ENCODE measurements at regions of chr10 and their contacts with region 1.

Region 1: DNA sequence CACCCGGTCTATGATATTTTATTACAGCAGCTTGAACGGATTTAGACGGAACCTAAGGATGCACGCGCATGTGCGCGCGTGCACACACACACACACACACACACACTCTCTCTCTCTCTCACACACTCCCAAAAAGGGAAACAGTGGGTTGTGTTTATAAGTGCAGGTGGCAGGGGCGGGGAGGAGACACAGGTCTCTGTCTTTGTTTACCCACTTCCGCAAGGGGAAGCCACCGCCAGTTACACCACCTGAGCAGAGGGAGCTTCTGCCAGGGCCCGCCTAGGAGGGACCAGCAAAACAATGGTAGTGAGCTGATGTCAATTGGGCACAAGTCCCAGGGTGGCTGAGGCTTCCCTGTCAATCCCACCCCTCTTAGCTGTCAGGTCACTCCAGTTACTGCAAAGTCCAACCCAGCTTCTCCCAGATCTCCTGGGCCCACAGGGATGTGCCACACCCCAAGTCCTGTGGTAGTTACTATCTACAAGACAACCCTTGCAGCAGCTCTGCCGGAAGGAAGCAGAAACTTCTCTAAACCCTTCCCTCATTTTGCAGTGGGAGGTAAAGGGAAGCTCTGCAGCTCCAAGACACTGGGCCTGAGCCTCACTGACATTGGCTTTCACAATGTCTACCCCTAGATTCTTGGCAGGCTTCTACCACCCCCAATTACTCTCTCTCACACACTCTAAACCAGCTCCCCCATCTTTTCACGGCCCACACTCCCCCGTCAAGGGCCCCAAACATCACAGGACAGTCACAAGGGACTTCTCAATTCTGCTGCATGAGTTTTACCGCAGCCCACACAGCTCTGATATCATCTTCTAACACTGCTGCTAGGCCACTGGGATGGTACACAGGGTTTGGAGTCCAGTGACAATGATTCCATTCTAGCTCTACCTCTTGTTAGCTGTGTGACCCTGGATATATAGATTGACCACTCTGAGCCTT is 17.6 kb downstream of the ANXA11 start:
- DNase-seq: no peak
- ATAC-seq: peak; percentile 11 to 39 (median 14)
- H3K4me3 ChIP-seq: peak overlapping the region in 1 of 10 donors; percentile 12
- H3K27ac ChIP-seq: peak overlapping the region in 9 of 10 donors; percentile 59 to 84 (median 81)
- H3K4me1 ChIP-seq: peaks cover 33 to 97% (median 93%) of the 10 kb centered on the region in 9 donors
- H3K27me3 ChIP-seq: no peaks in the 10 kb centered on the region
- CTCF ChIP-seq: no peak

Region 2: DNA sequence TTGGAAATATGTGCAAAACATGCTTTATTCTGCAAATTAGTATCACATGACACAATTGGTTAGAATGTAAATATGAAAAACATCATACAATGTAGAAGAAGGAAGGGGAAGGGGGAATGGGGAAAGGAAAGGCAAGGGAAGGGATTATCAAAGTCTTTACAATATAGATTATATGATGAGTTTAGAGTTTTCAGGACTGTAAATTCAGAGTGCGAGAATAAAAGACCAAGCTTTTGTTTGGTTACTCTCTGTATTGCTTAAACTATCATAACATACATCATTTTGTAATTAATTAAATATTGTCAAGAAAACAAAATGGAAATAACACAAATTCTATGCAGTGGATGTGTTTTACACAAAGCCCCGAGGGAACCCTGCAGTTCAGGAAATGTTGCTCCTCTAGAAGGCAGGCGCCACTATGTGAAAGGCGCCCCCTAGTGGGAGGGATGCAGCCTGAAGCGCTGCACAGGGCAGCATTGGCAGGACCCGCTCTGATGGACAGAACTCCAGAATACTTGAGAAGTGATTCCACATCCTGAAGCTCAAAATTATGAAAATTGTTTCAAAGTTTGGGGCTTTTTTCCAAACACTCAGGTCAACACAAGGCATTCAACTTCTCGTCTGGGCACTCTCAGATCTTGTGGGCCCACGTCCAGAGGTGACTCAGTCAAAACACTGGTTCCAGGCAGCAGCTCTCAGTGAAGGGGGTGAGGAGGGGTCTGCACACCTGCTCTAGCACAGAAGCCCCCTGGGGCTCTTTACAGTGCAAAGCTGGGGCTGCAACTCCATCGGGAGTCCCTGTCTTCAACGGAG is 140.9 kb before region 1 on chr10:
- intact Hi-C with region 1: no loop called
- DNase-seq: peak; percentile 70 to 71
- ATAC-seq: peak; percentile 77 to 95 (median 93)
- H3K4me3 ChIP-seq: no peak overlapping the region
- H3K27ac ChIP-seq: no peak overlapping the region
- H3K4me1 ChIP-seq: no peaks in the 10 kb centered on the region
- H3K27me3 ChIP-seq: no peaks in the 10 kb centered on the region
- CTCF ChIP-seq: peak; percentile 70 to 98 (median 89)

Region 3: GRCh38 chr10:80197972-80198916 is 10.5 kb after region 1 on chr10:
- intact Hi-C with region 1: loop called in 1 of 10 experiments (anchors 1 kb)
- DNase-seq: no peak
- ATAC-seq: peak in 4 of 8 donors; percentile 4 to 15 (median 8)
- H3K4me3 ChIP-seq: peak overlapping the region in 3 of 10 donors; percentile 33 to 84 (median 41)
- H3K27ac ChIP-seq: peak overlapping the region; percentile 27 to 100 (median 99)
- H3K4me1 ChIP-seq: peaks cover 32 to 100% (median 99%) of the 10 kb centered on the region in 9 donors
- H3K27me3 ChIP-seq: no peaks in the 10 kb centered on the region
- CTCF ChIP-seq: no peak

Measured in heart right ventricle (tissue), 16 donors.